Naive thymus-derived CD4-positive, alpha-beta T cell (primary cell): ENCODE measurements at regions of chr17 and their contacts with region 1.

Region 1: GRCh38 chr17:29148790-29149430 is 31.3 kb downstream of the MYO18A start:
- DNase-seq: peak; percentile 82 to 97 (median 89)
- ATAC-seq: peak; percentile 99
- H3K4me3 ChIP-seq: peak overlapping the region; percentile 58
- H3K4me3 Mint-ChIP-seq: peak overlapping the region; percentile 70 to 84 (median 77)
- H3K27ac ChIP-seq: peak overlapping the region; percentile 73
- H3K27ac Mint-ChIP-seq: peak overlapping the region; percentile 71 to 93 (median 87)
- H3K4me1 ChIP-seq: peaks cover 9 to 22% of the 10 kb centered on the region in 2 donors
- H3K4me1 Mint-ChIP-seq: peaks cover 37 to 59% (median 45%) of the 10 kb centered on the region in 7 donors
- H3K27me3 ChIP-seq: no peaks in the 10 kb centered on the region
- H3K27me3 Mint-ChIP-seq: no peaks in the 10 kb centered on the region

Region 2: GRCh38 chr17:28494445-28495188 is 654.3 kb before region 1 on chr17:
- CTCF ChIA-PET with region 1: no interaction called
- POLR2A ChIA-PET with region 1: no interaction called
- intact Hi-C with region 1: no loop called
- DNase-seq: peak; percentile 56 to 85 (median 73)
- ATAC-seq: peak; percentile 90
- H3K4me3 ChIP-seq: no peak overlapping the region
- H3K4me3 Mint-ChIP-seq: no peak overlapping the region
- H3K27ac ChIP-seq: no peak overlapping the region
- H3K27ac Mint-ChIP-seq: no peak overlapping the region
- H3K4me1 ChIP-seq: no peaks in the 10 kb centered on the region
- H3K4me1 Mint-ChIP-seq: peaks cover 0 to 2% (median 0%) of the 10 kb centered on the region in 7 donors
- H3K27me3 ChIP-seq: no peaks in the 10 kb centered on the region
- H3K27me3 Mint-ChIP-seq: no peaks in the 10 kb centered on the region

Region 3: GRCh38 chr17:29124117-29124924 is 24.6 kb before region 1 on chr17:
- CTCF ChIA-PET with region 1: interaction called, 93 read pairs
- POLR2A ChIA-PET with region 1: interaction called, 8 read pairs
- intact Hi-C with region 1: loop called (anchors 1 kb)
- DNase-seq: peak in 6 of 9 donors; percentile 34 to 59 (median 48)
- ATAC-seq: peak; percentile 87
- H3K4me3 ChIP-seq: no peak overlapping the region
- H3K4me3 Mint-ChIP-seq: no peak overlapping the region
- H3K27ac ChIP-seq: no peak overlapping the region
- H3K27ac Mint-ChIP-seq: peak overlapping the region in 2 of 9 donors; percentile 54 to 55
- H3K4me1 ChIP-seq: no peaks in the 10 kb centered on the region
- H3K4me1 Mint-ChIP-seq: peaks cover 0 to 16% (median 5%) of the 10 kb centered on the region in 7 donors
- H3K27me3 ChIP-seq: no peaks in the 10 kb centered on the region
- H3K27me3 Mint-ChIP-seq: no peaks in the 10 kb centered on the region

Region 4: DNA sequence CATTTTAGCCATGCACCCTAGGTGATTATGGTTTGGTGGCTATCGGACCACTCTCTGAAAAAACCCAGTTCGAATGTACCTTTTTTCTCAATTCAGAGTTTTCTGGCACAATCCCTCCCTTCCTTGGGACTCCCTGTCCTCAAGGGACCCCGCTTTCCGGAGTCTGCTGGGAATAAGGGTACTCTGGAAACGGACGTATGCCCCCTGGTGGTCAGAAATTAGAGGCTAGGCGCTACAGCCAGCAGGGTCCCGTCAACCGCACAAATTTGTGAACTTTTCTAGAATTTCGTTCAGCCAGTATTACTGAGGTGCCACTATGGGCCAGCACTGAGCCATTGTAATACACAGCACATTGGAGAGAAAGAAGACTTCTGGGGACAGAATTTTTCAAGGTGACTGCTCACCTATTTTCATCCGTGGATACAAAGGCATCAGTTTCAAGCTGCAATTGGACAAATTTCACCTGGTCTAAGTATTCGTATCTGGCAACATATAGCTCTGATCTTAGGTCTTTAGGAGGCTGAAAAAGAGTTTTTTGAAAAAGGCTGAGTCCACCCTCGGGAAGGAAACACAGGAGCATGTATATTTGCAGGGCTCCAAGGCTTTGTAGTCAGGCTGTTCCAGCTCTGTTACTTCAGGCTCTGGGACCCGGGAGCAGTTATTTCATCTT is 70.6 kb after region 1 on chr17:
- CTCF ChIA-PET with region 1: interaction called, 81 read pairs
- POLR2A ChIA-PET with region 1: interaction called, 8 read pairs
- intact Hi-C with region 1: loop called (anchors 1 kb)
- DNase-seq: peak; percentile 41 to 73 (median 62)
- ATAC-seq: peak; percentile 94
- H3K4me3 ChIP-seq: no peak overlapping the region
- H3K4me3 Mint-ChIP-seq: no peak overlapping the region
- H3K27ac ChIP-seq: no peak overlapping the region
- H3K27ac Mint-ChIP-seq: peak overlapping the region in 2 of 9 donors; percentile 3 to 12
- H3K4me1 ChIP-seq: no peaks in the 10 kb centered on the region
- H3K4me1 Mint-ChIP-seq: peaks cover 0 to 10% (median 5%) of the 10 kb centered on the region in 7 donors
- H3K27me3 ChIP-seq: no peaks in the 10 kb centered on the region
- H3K27me3 Mint-ChIP-seq: peaks cover 0 to 13% (median 0%) of the 10 kb centered on the region in 5 donors

Region 5: GRCh38 chr17:29533976-29534375 is 385.1 kb after region 1 on chr17:
- CTCF ChIA-PET with region 1: interaction called, 4 read pairs
- POLR2A ChIA-PET with region 1: no interaction called
- intact Hi-C with region 1: loop called in 1 of 2 experiments (anchors 2 kb)
- DNase-seq: no peak
- ATAC-seq: no peak
- H3K4me3 ChIP-seq: no peak overlapping the region
- H3K4me3 Mint-ChIP-seq: no peak overlapping the region
- H3K27ac ChIP-seq: no peak overlapping the region
- H3K27ac Mint-ChIP-seq: peak overlapping the region in 2 of 9 donors; percentile 14 to 36
- H3K4me1 ChIP-seq: no peaks in the 10 kb centered on the region
- H3K4me1 Mint-ChIP-seq: no peaks in the 10 kb centered on the region
- H3K27me3 ChIP-seq: no peaks in the 10 kb centered on the region
- H3K27me3 Mint-ChIP-seq: no peaks in the 10 kb centered on the region